Mammary epithelial cell (primary cell): ENCODE measurements at regions of chr14 and their contacts with region 1.

Region 1: DNA sequence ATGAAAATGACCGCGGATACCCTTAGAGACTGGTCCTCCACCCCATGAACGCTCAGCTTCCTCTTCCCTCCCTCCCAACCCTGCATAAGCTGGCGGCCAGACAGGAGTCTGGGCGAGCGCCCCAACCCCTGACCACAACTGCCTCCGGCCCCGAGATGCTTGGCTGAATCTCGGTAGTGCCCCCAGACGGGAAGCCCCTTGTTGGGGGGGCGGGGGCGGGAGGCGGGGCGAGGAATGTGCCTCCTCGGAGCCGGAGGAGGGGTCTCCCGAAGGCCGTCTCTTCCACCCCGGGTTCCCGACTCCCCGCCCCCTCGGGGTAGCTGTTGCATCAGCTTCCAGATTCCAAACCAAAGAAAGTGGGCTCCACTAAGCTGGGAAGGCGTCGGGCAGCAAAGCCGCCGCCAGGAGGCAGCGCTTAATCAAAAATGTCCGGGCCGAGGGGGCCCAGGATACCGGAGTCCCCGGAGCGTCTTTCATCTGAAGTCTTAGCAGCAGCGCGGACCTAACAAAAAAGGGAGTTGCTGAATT is 7.1 kb upstream of the MRPL52 start:
- DNase-seq: peak; percentile 63
- H3K4me3 ChIP-seq: peak overlapping the region; percentile 9 to 15 (median 11)
- H3K27ac ChIP-seq: peak overlapping the region; percentile 50
- H3K4me1 ChIP-seq: peaks cover 45% of the 10 kb centered on the region
- H3K27me3 ChIP-seq: no peaks in the 10 kb centered on the region
- CTCF ChIP-seq: peak; percentile 74 to 85

Region 2: GRCh38 chr14:22802860-22803686 is 19.6 kb before region 1 on chr14:
- CTCF ChIA-PET with region 1: interaction called, 13 read pairs
- dilution Hi-C with region 1: no loop called
- in situ Hi-C with region 1: no loop called
- intact Hi-C with region 1: no loop called
- DNase-seq: no peak
- H3K4me3 ChIP-seq: no peak overlapping the region
- H3K27ac ChIP-seq: no peak overlapping the region
- H3K4me1 ChIP-seq: peaks cover 10% of the 10 kb centered on the region
- H3K27me3 ChIP-seq: peaks cover 2% of the 10 kb centered on the region
- CTCF ChIP-seq: no peak

Region 3: DNA sequence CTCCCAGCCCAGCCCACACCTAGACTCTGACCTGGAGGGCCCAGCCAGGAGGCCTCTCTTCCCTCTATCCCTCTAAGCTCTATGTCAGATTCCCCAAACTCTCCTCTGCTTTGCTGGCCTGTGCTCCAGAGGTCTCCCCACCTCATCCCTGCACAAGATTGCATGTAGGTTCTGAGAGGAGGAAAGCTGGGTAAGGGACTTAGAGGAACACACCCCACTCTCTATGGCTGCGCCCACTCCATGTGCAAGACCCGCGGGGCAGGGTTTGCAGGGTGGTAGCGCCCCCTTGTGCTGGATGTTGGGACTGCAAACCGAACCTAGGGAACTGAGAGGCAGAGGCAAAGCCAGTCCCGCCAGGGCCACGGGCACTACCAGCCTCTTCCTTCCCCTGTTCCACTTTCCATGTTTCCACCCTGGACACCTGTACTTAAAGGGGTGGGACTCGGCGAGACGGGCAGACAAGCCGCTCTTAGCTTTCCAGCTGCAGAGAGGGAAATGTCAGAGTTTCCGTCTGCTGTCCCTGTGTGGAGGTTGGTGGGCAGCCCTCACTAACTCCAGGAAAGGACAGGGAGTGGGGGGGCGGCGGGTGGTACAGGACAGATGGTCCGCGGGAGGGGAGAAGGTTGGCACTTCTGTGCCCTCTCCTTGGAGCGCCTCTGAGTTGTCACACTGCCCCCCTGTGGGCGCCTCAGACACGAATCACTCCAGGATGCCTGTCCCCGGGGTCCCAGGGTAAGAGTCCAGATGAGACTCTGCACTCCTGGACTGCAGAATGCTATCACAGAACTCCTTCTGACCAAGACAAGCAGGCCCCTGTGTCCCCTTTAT is 30.5 kb after region 1 on chr14:
- CTCF ChIA-PET with region 1: interaction called, 15 read pairs
- dilution Hi-C with region 1: no loop called
- in situ Hi-C with region 1: no loop called
- intact Hi-C with region 1: loop called (anchors 1 kb)
- DNase-seq: peak; percentile 80
- H3K4me3 ChIP-seq: peak overlapping the region in 2 of 3 experiments; percentile 7 to 52
- H3K27ac ChIP-seq: peak overlapping the region; percentile 90
- H3K4me1 ChIP-seq: peaks cover 54% of the 10 kb centered on the region
- H3K27me3 ChIP-seq: no peaks in the 10 kb centered on the region
- CTCF ChIP-seq: peak; percentile 91 to 93

Region 4: DNA sequence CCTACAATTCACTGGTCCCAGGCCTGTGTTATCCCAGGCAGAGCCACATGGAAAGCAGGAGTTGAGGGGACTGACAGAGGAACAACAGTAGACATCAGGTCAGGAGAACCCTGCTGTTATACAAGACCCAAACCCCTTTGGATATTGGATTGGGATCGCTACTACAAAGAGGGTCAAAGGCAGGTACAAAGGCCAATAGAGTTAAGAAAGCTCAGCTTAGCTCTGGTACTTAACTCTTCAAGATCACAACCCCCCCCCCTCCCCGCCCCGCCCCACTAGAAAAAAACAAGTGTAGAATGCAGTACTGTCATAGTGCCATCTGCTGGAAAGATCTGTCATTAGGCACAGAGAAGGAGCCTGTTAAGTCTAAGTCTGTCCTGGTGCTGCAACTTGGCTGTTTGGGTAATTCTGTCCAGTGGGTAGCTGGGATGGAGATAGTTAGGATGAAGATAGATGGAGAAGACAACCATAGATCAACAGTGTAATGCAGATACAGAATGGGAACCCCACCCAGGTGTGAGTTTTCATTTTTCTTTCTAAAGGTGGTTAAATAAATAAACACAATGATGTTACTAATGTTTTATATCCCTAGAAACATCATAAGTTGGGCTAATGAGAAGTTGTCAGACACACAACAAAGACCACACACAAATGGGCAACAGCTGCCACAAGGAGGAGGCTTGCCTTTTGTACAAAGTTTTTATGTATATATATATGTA is 77.6 kb after region 1 on chr14:
- CTCF ChIA-PET with region 1: no interaction called
- dilution Hi-C with region 1: no loop called
- in situ Hi-C with region 1: no loop called
- intact Hi-C with region 1: loop called (anchors 1 kb)
- DNase-seq: peak; percentile 56
- H3K4me3 ChIP-seq: no peak overlapping the region
- H3K27ac ChIP-seq: no peak overlapping the region
- H3K4me1 ChIP-seq: peaks cover 20% of the 10 kb centered on the region
- H3K27me3 ChIP-seq: no peaks in the 10 kb centered on the region
- CTCF ChIP-seq: peak; percentile 66 to 68

Region 5: DNA sequence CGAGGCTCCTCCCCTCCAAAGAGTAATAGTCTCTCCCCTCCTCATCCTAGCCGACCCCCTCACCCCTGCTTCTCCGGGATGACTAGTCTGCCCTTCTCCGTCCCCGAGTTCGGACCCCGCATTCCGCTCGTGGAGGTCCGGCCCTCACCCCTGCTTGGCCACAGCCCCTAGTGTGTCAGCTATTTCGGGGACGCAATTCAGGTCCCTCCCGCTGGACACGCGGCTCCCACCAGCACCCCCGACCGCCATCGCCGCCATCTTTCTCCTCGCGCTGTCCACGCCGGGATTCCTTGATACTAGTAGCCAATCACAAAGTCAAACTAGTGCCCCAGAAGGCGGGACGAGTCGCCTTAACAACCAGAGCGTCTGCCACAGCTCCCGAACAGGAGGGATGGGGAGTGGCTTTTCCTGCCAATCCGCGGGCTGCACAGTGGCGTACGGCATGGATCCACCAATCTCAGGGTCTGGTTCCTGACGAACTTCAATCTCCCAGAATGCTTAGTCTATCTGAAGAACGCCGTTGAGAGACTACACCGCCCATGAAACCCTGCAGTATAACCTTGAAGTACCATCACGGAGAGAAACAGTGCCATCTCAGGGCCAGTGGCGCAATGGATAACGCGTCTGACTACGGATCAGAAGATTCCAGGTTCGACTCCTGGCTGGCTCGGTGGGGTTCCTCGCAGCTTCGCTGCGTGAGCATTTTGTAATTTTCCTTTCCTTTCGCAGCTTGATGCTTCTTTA is 106.6 kb after region 1 on chr14 and contains the start of gene PRMT5:
- CTCF ChIA-PET with region 1: no interaction called
- dilution Hi-C with region 1: no loop called
- in situ Hi-C with region 1: no loop called
- intact Hi-C with region 1: loop called (anchors 1 kb)
- DNase-seq: peak; percentile 99
- H3K4me3 ChIP-seq: peak within 1 kb of the TSS; percentile 87 to 97 (median 94)
- H3K27ac ChIP-seq: peak within 1 kb of the TSS; percentile 87
- H3K4me1 ChIP-seq: peaks cover 27% of the 10 kb centered on the region
- H3K27me3 ChIP-seq: no peaks in the 10 kb centered on the region
- CTCF ChIP-seq: no peak
- total RNA-seq, gene PRMT5: 61.3 to 120 TPM

Region 6: DNA sequence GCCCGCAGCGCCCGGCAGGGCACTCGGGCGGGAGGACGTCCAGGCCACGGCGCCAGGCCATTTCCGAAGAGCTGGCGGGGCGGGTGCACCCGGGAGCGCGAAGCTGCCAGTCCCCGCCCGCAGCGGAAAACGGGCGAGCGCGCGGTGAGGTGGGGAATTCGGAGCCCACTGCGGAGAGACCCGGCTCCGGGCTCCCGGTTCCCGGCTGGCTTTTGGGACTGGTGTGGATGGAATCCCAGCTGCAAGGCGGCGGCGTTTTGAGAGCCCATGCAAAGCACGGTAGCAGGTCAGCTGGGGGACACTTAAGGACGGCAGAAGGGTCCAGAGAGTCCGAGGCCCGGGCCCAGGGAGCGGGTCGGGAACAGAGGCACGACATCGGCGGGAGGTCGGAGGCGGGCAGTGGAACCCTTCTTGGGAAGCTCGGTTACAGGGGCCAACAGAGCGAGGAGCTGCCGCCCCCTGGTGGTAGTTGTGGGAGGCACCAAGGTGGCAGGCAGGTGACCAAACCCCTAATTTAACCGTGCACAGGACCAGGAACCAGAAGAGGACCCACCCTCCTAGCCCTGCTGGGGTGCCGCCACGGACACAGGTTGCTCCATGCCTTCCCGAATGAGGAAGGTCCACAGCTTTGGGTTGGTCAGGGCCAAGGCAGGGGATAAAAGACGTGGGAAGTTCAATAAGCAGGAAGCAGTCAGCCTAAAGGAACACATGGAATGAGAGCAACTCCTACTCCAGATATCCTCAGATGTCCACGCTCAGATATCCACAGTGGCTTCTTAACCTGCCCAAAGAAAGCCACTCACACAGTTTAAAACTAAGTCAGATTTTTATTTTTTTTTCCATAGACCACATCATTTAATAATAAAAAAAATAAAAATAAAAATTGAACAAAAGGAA is 235.4 kb after region 1 on chr14:
- CTCF ChIA-PET with region 1: interaction called, 6 read pairs
- dilution Hi-C with region 1: no loop called
- in situ Hi-C with region 1: no loop called
- intact Hi-C with region 1: loop called (anchors 5 kb)
- DNase-seq: peak; percentile 74
- H3K4me3 ChIP-seq: peak overlapping the region; percentile 50 to 65 (median 55)
- H3K27ac ChIP-seq: no peak overlapping the region
- H3K4me1 ChIP-seq: peaks cover 31% of the 10 kb centered on the region
- H3K27me3 ChIP-seq: no peaks in the 10 kb centered on the region
- CTCF ChIP-seq: peak; percentile 82 to 93

Region 7: GRCh38 chr14:23137192-23137829 is 314.7 kb after region 1 on chr14:
- CTCF ChIA-PET with region 1: no interaction called
- dilution Hi-C with region 1: no loop called
- in situ Hi-C with region 1: no loop called
- intact Hi-C with region 1: no loop called
- DNase-seq: peak; percentile 80
- H3K4me3 ChIP-seq: no peak overlapping the region
- H3K27ac ChIP-seq: peak overlapping the region; percentile 66
- H3K4me1 ChIP-seq: peaks cover 30% of the 10 kb centered on the region
- H3K27me3 ChIP-seq: no peaks in the 10 kb centered on the region
- CTCF ChIP-seq: no peak